K562 (cell line): ENCODE measurements at regions of chr18 and their contacts with region 1.

Region 1: DNA sequence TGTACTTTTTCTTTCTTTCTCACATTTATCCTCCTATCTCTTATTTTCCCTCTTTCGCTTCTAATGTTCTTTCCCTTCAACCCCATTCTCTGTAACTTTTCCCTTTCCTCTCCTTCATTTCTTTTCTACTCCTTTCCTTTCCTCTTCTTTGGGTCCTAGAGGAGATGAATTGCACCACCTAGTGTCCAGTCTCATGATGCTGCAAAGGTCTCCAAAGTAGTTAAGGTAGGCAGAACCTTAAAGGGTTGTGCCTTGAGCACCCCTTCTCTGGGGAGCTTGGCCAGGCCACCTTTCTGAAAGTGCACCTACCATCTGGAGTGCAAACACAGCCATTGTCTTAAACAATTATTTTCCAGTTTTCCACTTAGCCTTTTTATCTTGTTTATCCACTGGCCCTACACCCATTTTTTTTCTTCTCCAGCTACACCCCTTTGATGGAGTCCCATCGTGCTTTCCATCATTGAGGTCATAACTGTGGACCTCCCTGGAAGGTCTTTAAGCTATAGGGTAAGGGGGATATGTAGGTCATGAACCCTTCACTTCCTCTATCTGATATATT is 156.0 kb downstream of the ESCO1 start:
- DNase-seq: peak; percentile 19 to 60 (median 34)
- ATAC-seq: peak; percentile 89
- H3K4me3 ChIP-seq: no peak overlapping the region
- H3K27ac ChIP-seq: no peak overlapping the region
- H3K4me1 ChIP-seq: no peaks in the 10 kb centered on the region
- H3K27me3 ChIP-seq: no peaks in the 10 kb centered on the region; a peak in 3 of 5 replicates
- CTCF ChIP-seq: peak; percentile 61 to 72 (median 70); a peak in 5 of 6 replicates
- EP300 ChIP-seq: no peak
- POLR2A ChIP-seq: no peak
- RAD21 ChIP-seq: peak; percentile 34 to 84; a peak in 3 of 4 replicates

Region 2: DNA sequence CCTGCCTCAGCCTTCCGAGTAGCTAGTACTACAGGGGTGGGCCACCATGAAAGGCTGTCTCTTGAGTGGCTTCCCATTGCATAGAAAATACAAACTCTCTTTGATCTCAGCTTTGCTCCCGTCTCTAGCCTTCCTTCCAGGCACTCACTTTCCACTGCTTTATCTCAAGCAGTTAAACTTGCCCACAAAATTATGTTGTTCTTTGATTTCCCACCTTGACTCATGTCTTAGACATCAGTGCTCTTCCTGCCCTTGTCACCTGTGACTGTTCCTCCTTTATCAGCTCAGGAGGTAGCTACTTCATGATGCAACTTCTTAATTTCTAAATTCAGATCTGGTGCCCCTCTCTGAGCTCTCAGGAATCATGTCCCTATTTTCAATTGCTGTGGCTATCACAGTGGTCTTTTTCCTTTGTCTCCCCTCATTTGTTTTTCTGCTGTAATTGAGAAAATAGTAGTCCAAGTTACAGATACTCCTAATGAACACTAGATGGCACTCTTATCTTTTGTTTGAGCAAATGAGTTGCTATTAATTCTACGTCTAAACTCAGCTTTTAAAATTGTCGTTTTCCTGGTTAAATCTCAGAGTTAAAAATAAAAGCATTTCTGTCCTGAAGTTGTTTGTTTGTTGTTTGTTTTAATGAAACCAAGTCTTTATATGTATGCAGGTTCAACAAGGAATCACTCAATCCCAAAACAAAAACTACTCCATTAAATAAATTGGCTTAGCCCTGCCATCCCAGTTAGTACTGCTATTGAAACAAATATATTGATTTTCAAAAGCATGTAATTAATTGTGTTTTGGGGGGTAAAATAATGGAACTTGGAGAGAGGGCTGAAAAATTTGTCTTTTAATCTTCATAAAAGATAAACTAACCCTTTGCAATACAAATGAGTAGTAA is 249.4 kb before region 1 on chr18:
- CTCF ChIA-PET with region 1: interaction called, 10 read pairs
- POLR2A ChIA-PET with region 1: no interaction called
- in situ Hi-C with region 1: loop called (anchors 10 kb)
- intact Hi-C with region 1: loop called (anchors 1 kb)
- DNase-seq: peak; percentile 14 to 40 (median 18)
- ATAC-seq: 0 out of 3 replicates have a peak, but pooled peaks have one; percentile 61
- H3K4me3 ChIP-seq: no peak overlapping the region
- H3K27ac ChIP-seq: no peak overlapping the region
- H3K4me1 ChIP-seq: no peaks in the 10 kb centered on the region
- H3K27me3 ChIP-seq: no peaks in the 10 kb centered on the region
- CTCF ChIP-seq: peak; percentile 34 to 81 (median 47); a peak in 4 of 6 replicates
- EP300 ChIP-seq: no peak
- POLR2A ChIP-seq: no peak
- RAD21 ChIP-seq: peak; percentile 63 to 81

Region 3: DNA sequence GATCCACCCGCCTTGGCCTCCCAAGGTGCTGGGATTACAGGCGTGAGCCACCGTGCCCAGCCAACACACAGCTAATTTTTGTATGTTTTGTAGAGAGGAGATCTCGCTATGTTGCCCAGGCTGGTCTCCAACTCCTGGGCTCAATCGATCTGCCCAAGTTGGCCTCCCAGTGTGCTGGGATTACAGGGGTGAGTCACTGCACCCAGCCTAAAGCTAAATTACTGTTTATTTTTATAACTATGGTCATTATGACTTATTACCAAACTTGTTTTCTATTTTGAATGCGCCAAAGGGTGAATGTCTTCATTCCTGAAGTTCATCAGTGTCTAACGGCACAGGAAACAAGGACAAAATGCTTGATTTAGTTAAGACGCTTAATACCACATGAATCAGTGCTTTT is 241.4 kb before region 1 on chr18:
- CTCF ChIA-PET with region 1: no interaction called
- POLR2A ChIA-PET with region 1: no interaction called
- in situ Hi-C with region 1: loop called (anchors 10 kb)
- intact Hi-C with region 1: no loop called
- DNase-seq: no peak
- ATAC-seq: no peak
- H3K4me3 ChIP-seq: no peak overlapping the region
- H3K27ac ChIP-seq: no peak overlapping the region
- H3K4me1 ChIP-seq: no peaks in the 10 kb centered on the region
- H3K27me3 ChIP-seq: peaks cover 4 to 7% of the 10 kb centered on the region in 2 experiments; a peak in 4 of 5 replicates
- CTCF ChIP-seq: no peak
- EP300 ChIP-seq: no peak
- POLR2A ChIP-seq: no peak
- RAD21 ChIP-seq: no peak

Region 4: GRCh38 chr18:21359746-21360145 is 84.8 kb before region 1 on chr18:
- CTCF ChIA-PET with region 1: no interaction called
- POLR2A ChIA-PET with region 1: no interaction called
- in situ Hi-C with region 1: no loop called
- intact Hi-C with region 1: loop called (anchors 10 kb)
- DNase-seq: no peak
- ATAC-seq: no peak
- H3K4me3 ChIP-seq: no peak overlapping the region
- H3K27ac ChIP-seq: no peak overlapping the region
- H3K4me1 ChIP-seq: no peaks in the 10 kb centered on the region
- H3K27me3 ChIP-seq: no peaks in the 10 kb centered on the region; a peak in 1 of 5 replicates
- CTCF ChIP-seq: no peak
- EP300 ChIP-seq: no peak
- POLR2A ChIP-seq: no peak
- RAD21 ChIP-seq: no peak

Region 5: GRCh38 chr18:21479721-21480120 is 35.2 kb after region 1 on chr18:
- CTCF ChIA-PET with region 1: no interaction called
- POLR2A ChIA-PET with region 1: no interaction called
- in situ Hi-C with region 1: no loop called
- intact Hi-C with region 1: no loop called
- DNase-seq: no peak
- ATAC-seq: no peak
- H3K4me3 ChIP-seq: no peak overlapping the region
- H3K27ac ChIP-seq: no peak overlapping the region
- H3K4me1 ChIP-seq: no peaks in the 10 kb centered on the region
- H3K27me3 ChIP-seq: peaks cover 0 to 4% of the 10 kb centered on the region in 2 experiments; a peak in 3 of 5 replicates
- CTCF ChIP-seq: no peak
- EP300 ChIP-seq: no peak
- POLR2A ChIP-seq: no peak
- RAD21 ChIP-seq: no peak

Region 6: GRCh38 chr18:21548637-21549036 is 104.1 kb after region 1 on chr18:
- CTCF ChIA-PET with region 1: no interaction called
- POLR2A ChIA-PET with region 1: no interaction called
- in situ Hi-C with region 1: no loop called
- intact Hi-C with region 1: no loop called
- DNase-seq: peak in 1 of 4 experiments; percentile 4
- ATAC-seq: no peak; the same call in 2 of the 3 replicates
- H3K4me3 ChIP-seq: no peak overlapping the region
- H3K27ac ChIP-seq: no peak overlapping the region
- H3K4me1 ChIP-seq: no peaks in the 10 kb centered on the region; a peak in 1 of 5 replicates
- H3K27me3 ChIP-seq: no peaks in the 10 kb centered on the region
- CTCF ChIP-seq: no peak
- EP300 ChIP-seq: no peak
- POLR2A ChIP-seq: no peak
- RAD21 ChIP-seq: no peak

Region 7: DNA sequence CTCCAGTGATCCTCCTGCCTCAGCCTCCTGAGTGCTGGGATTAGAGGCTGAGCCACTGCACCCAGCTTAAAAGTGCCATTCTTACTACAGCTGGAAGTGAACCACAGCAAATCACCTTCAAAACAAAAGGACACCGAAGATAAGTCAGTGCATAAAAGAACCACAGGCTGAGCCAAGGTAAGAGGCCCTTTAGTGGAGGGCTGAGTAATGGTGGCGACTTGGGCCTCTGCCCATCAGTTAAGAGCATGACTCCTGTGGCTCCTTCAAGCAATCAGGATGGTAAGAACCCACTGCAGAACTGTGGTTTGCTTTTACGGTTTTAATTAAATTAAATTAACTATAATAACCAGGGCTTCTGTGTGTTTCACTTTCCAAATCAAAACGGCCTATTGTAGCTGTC is 898.1 kb after region 1 on chr18:
- CTCF ChIA-PET with region 1: no interaction called
- POLR2A ChIA-PET with region 1: no interaction called
- in situ Hi-C with region 1: no loop called
- intact Hi-C with region 1: no loop called
- DNase-seq: peak; percentile 24 to 56 (median 38)
- ATAC-seq: peak; percentile 80
- H3K4me3 ChIP-seq: no peak overlapping the region
- H3K27ac ChIP-seq: no peak overlapping the region
- H3K4me1 ChIP-seq: peaks cover 0 to 3% of the 10 kb centered on the region in 2 experiments; a peak in 1 of 5 replicates
- H3K27me3 ChIP-seq: peaks cover 11 to 29% of the 10 kb centered on the region in 2 experiments
- CTCF ChIP-seq: no peak
- EP300 ChIP-seq: no peak
- POLR2A ChIP-seq: no peak
- RAD21 ChIP-seq: no peak